ENCODE measurements at regions of chr1 and their contacts with region 1.

Region 1: DNA sequence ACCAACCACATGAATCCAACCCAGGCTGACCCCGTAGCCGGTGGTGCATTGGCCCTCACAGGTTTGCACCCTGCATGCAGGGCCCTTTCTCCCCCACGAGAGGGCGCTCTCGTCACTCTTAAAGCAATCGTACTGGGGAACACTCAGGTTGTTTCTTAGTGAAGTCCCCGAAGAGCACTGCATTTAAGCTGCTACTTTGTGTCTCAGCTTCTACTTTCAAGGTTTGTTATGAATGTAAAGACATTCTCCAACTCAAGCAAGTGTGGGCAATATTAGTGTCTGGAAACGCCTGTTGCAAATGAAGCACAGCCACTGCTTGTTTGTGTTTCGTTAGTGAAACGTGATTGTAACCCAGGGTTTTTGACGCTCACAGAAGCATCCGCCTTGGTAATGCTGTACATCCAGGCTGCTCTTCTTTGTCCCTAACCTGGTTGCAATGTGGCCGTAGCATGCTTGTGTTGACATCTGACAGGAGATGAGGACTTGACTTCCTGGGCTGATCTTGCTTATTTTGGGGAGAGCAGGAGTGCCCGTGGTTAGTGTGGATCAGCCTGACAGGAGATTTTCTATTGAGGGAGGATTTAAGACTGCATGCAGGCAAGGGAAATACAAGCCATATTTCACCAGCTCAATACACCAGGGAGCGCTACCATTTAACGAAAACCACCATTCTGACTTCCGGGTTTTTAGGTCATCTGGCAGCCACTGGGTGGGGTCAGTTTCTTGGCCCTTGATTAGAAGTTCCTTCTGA is 79.8 kb downstream of the ST6GALNAC3 start:
- DNase-seq: peak; percentile 75
- H3K4me3 Mint-ChIP-seq: peak overlapping the region; percentile 87
- H3K27ac Mint-ChIP-seq: peak overlapping the region; percentile 82
- H3K4me1 Mint-ChIP-seq: peaks cover 14% of the 10 kb centered on the region
- H3K27me3 Mint-ChIP-seq: peaks cover 2% of the 10 kb centered on the region

Region 2: DNA sequence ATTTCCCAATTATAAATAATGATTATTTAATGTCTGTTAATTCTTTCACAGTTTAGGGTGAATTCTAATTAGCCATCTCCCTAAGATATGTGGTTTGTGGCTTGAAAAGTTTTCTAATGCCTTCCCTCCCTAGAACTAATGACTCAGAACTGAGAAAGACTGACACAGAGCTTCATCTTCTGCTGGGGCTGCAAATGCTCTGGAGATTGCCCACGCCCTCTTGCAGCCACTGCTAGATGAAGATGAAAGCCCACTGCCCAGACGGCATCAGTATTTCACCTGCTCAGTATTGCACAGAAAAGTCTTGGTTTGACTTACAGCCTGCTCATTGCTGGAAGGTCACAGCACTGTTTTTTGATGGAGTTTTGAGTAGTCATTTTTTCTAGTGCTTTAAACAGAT is 21.6 kb after region 1 on chr1:
- intact Hi-C with region 1: no loop called
- DNase-seq: no peak
- H3K4me3 Mint-ChIP-seq: no peak overlapping the region
- H3K27ac Mint-ChIP-seq: no peak overlapping the region
- H3K4me1 Mint-ChIP-seq: peaks cover 7% of the 10 kb centered on the region
- H3K27me3 Mint-ChIP-seq: peaks cover 2% of the 10 kb centered on the region

Region 3: GRCh38 chr1:76254104-76255030 is 100.0 kb after region 1 on chr1:
- intact Hi-C with region 1: loop called (anchors 10 kb)
- DNase-seq: no peak
- H3K4me3 Mint-ChIP-seq: no peak overlapping the region
- H3K27ac Mint-ChIP-seq: peak overlapping the region; percentile 32
- H3K4me1 Mint-ChIP-seq: peaks cover 49% of the 10 kb centered on the region
- H3K27me3 Mint-ChIP-seq: no peaks in the 10 kb centered on the region

Region 4: DNA sequence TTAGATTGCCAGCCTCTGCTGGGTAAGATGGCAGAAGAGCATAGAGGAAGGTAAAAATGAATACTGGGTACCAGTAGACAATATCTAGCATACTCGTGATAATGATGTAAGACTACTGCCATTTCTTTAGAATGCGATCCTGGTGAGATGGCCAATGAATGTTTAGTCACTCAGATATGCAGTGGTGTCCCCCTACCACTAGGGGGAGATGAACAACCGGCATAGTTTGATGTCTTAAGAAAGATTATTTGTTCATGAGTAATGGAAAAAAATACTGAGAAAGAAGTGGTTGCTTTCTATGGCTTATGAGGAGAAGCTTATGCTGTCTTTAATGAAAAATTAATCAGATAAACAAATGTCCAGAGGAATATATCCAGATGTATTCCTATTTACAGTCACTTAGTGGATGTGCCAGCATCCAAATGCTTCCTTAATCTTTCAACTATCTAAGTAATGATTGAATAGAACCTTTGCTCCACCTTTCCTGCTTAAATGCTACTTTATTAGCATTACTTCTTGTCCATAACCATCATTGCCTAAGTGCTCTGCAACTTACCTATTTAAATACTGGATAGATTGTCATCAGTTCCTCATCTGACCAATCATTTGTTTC is 176.7 kb after region 1 on chr1:
- intact Hi-C with region 1: loop called (anchors 1 kb)
- DNase-seq: peak; percentile 4
- H3K4me3 Mint-ChIP-seq: no peak overlapping the region
- H3K27ac Mint-ChIP-seq: no peak overlapping the region
- H3K4me1 Mint-ChIP-seq: peaks cover 9% of the 10 kb centered on the region
- H3K27me3 Mint-ChIP-seq: peaks cover 4% of the 10 kb centered on the region

Region 5: DNA sequence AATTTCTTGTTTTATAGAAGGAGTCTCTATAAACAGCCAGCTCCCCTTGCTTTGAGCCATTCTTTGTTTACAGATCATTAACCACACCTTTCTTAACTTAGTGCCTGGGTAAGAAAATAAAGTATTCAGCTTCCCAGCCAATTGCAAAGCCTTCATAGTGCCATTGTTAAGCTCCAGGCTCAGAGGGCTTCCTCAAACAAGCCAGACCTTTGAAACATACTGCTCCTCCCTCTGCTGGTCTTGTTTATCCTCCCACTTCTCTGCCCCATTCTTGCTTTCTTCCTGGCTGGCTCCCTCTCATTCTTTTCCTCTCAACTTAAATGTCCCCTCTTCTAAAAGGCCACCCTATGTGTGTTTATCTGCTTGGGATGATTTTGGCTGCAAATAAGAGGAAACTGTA is 393.5 kb after region 1 on chr1:
- intact Hi-C with region 1: loop called (anchors 10 kb)
- DNase-seq: no peak
- H3K4me3 Mint-ChIP-seq: no peak overlapping the region
- H3K27ac Mint-ChIP-seq: no peak overlapping the region
- H3K4me1 Mint-ChIP-seq: no peaks in the 10 kb centered on the region
- H3K27me3 Mint-ChIP-seq: no peaks in the 10 kb centered on the region

Region 6: DNA sequence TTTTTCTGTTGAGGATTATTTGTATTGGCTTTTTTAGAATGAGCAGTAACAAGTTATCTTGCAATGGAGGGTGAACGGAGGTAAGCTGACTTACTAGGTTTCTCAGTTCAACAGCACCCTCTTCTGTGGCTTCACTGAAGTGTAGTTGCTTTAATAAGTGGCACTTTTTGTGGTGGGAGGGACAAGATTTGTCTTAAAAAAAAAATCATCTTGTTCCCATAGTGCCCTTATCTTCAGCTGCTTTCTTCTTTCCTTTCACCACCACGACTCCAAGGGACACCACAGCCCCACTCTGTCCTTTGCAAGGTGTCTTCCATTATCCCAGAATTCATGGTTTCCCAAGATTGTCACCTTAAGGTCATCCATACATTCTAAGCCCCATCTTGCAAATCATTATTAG is 971.9 kb after region 1 on chr1:
- intact Hi-C with region 1: loop called (anchors 1 kb)
- DNase-seq: no peak
- H3K4me3 Mint-ChIP-seq: no peak overlapping the region
- H3K27ac Mint-ChIP-seq: no peak overlapping the region
- H3K4me1 Mint-ChIP-seq: no peaks in the 10 kb centered on the region
- H3K27me3 Mint-ChIP-seq: no peaks in the 10 kb centered on the region

Region 7: GRCh38 chr1:77533660-77534305 is 1379.4 kb after region 1 on chr1:
- intact Hi-C with region 1: loop called (anchors 1 kb)
- DNase-seq: peak; percentile 18
- H3K4me3 Mint-ChIP-seq: no peak overlapping the region
- H3K27ac Mint-ChIP-seq: no peak overlapping the region
- H3K4me1 Mint-ChIP-seq: no peaks in the 10 kb centered on the region
- H3K27me3 Mint-ChIP-seq: no peaks in the 10 kb centered on the region